ENCODE measurements at regions of chr7 and their contacts with region 1.

Region 1: DNA sequence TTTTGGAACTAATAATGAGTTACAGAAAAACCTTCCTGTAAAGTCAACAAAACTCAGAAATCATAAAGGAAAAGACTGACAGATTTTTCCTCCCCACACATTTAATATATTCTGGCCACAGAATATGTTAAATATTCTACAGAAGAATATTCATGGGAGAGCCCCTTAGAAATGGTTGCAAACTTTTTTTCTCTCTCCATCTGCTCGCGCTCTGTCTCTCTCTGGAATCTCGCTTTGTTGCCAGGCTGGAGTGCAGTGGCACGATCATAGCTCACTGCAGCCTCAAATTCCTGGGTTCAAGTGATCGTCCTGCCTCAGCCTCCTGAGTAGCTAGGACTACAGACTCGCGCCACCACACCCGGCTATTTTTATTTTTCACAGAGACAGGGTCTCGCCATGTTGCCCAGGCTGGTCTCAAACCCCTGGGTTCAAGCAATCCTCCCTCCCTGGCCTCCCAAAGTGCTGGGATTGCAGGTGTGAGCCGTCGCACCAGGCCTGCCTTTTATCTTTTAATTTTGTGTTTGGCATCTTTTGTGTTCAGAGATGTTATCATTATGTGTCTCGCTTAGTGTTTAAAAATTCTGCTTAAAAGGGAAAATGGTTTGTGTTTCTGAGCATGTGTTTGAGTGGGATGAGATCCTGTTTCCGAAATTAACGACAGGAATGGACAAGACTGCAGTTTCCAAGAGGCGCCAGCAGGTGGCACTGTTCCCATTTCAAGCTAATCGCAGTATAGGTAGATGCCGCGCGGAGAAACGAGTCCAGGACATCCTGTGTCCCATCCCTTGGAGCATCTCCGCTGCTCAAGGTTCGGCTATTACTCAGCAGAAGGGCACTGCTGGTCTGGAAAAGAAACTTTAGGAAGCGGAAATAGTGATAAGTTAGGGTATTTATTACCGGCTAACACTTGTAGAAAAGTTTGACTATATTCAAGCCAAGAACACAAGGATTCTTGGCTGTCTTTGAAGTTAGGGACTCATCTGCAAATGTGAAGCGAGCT is 23.1 kb upstream of the ST7 start:
- DNase-seq: peak; percentile 90

Region 2: GRCh38 chr7:116984917-116985316 is 54.7 kb after region 1 on chr7:
- intact Hi-C with region 1: loop called (anchors 2 kb)
- DNase-seq: no peak